Activated CD8-positive, alpha-beta memory T cell treated with anti-CD3 and anti-CD28 coated beads, Interleukin-2, amount 10 ng/mL, durations not matched to agents 7 days and 5 days (primary cell): ENCODE measurements at regions of chr3 and their contacts with region 1.

Region 1: GRCh38 chr3:171566803-171567422 is 106.7 kb upstream of the TNIK start:
- DNase-seq: no peak
- ATAC-seq: peak; percentile 66
- H3K4me3 Mint-ChIP-seq: no peak overlapping the region
- H3K27ac Mint-ChIP-seq: no peak overlapping the region
- H3K4me1 Mint-ChIP-seq: peaks cover 19% of the 10 kb centered on the region
- H3K27me3 Mint-ChIP-seq: peaks cover 19% of the 10 kb centered on the region

Region 2: DNA sequence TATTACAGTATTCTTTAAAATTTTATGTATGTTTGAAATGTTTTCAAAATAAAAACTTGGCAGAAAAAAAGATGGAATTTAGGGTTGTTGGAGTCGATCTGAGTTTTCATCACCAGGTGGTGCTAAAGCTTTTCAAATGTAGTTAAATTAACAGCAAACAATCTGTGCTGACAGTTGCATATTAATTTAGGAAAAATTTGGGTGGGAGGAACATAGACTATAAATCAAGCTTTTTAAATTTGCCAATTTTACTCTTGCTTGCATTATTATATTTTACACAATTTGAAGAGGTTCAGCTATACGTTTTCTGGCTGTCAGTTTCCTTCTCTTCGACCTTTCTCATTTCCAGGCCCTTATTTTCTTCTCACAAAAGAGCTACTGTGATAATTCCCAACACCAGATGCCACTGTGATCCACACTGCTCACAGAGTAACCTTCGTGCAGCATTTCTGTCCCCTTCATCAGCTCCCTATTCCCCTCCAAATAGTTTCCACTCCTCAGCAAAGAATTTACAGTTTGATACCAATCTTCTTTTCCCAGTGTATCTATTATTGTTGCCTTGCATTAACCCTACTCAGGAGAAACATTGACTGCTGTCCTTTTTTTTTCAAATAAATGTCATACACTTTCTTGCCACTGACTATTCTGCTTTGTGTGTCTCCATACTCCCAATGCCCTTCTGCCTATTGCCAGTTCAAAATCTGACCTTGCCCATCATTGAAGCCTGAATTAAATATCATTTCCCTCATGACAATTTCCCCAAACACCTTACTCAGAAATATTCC is 605.1 kb before region 1 on chr3:
- CTCF ChIA-PET with region 1: interaction called, 11 read pairs
- DNase-seq: no peak
- ATAC-seq: no peak
- H3K4me3 Mint-ChIP-seq: no peak overlapping the region
- H3K27ac Mint-ChIP-seq: no peak overlapping the region
- H3K4me1 Mint-ChIP-seq: peaks cover 5% of the 10 kb centered on the region
- H3K27me3 Mint-ChIP-seq: peaks cover 19% of the 10 kb centered on the region

Region 3: DNA sequence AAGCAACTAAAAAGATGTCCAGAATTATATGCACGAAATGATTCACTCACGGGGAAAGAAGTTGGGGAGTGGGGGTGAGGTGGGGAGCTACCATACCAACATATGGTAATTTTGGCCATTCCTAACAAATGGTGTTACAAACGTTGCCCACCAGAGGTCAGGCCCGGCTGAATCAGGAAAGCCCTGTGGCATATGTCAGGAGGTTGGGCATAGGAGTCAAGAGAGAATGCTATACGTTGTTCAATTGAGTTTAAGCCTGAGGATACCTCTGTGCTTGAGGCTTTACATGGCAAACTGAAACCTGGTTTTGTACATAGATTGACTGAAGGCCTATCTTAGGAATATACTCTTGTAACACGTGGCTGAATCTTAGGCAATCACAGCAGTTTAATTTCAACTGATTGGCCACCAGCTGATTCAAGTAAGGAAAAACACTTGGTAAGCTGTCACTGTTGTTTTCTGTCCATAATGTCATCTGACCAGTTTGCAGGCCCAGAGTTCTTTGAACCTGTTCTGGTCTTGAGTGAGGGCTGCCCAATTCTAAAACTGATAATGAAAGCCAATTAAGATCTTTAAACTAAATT is 517.0 kb before region 1 on chr3:
- CTCF ChIA-PET with region 1: interaction called, 26 read pairs
- DNase-seq: peak; percentile 64
- ATAC-seq: peak; percentile 76
- H3K4me3 Mint-ChIP-seq: no peak overlapping the region
- H3K27ac Mint-ChIP-seq: no peak overlapping the region
- H3K4me1 Mint-ChIP-seq: no peaks in the 10 kb centered on the region
- H3K27me3 Mint-ChIP-seq: peaks cover 8% of the 10 kb centered on the region

Region 4: DNA sequence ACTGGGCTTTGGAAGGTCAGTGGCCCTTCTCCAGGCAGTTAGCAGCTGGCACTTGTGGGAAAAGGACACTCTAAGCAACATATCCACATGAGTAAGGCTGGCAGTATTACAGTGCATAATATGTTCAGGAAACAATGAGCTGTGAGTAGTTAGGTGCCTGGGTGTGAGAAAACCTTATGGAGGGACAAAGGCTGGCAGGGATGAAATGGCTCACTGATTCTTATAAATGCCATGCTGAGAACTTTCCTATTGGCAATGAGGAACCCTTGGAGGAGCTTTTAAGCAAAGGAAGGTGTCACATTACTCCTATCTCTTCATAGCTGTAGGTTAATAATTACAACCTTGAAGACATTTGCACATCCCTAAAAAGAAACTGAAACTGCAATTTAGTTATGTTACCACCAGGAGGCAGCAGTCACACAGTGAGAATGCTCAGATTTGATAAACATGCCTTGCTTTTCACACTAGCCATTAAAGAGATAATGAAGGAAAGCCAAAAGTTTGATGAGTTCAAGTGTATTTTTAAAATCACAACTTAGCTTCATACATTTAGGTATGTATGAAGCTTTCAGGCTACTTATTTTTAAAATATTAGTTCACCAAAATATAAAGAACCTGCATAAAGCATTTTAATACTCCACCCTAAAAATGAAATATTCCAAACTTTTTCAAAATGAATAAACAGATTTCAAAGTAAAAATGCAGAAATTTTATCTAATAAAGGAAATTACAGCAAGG is 403.8 kb before region 1 on chr3:
- CTCF ChIA-PET with region 1: interaction called, 27 read pairs
- DNase-seq: no peak
- ATAC-seq: no peak
- H3K4me3 Mint-ChIP-seq: no peak overlapping the region
- H3K27ac Mint-ChIP-seq: peak overlapping the region; percentile 47
- H3K4me1 Mint-ChIP-seq: peaks cover 19% of the 10 kb centered on the region
- H3K27me3 Mint-ChIP-seq: no peaks in the 10 kb centered on the region

Region 5: DNA sequence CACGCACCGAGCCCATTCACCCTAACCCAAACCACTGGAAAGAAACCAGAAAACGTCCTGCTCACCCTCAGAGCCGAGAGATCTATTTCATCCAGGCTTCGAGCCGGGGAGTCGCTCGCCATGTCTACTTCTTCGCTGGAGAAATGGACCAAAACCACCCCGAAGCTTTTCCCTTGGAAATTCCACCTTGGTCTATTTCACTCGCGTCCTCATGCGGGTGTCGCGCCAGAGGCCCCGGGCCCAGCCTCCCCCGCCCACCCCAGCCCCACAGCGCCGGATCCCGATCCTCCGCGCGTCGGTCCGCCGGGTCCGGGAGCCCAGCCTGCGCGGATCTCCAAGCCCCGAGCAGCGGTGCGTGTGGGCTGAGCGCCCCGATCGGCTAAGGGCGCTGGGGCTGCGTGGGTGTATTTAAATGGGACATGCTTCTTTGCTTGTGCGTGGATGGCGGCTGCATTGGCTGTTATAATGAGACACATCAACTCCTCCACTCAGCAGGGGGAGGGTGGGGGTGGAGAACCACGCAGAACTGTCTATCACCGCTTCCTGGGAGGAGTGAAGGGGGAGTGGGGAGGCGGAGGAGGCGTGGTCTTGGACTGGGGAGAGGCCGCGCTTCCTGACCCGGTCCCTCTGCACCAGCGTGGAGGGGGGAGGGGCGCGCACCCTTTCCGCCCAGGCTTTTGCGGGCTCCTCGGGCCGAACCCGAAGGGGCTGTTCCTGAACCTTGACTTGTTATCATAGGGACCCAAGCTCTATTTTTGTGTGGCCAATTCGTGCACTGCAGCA is 106.8 kb before region 1 on chr3 and contains the start of gene TNIK:
- CTCF ChIA-PET with region 1: interaction called, 11 read pairs
- DNase-seq: peak; percentile 96
- ATAC-seq: peak; percentile 86
- H3K4me3 Mint-ChIP-seq: peak within 1 kb of the TSS; percentile 96
- H3K27ac Mint-ChIP-seq: peak within 1 kb of the TSS; percentile 93
- H3K4me1 Mint-ChIP-seq: peaks cover 40% of the 10 kb centered on the region
- H3K27me3 Mint-ChIP-seq: no peaks in the 10 kb centered on the region
- total RNA-seq, gene TNIK: 36.6 to 39.3 TPM

Region 6: DNA sequence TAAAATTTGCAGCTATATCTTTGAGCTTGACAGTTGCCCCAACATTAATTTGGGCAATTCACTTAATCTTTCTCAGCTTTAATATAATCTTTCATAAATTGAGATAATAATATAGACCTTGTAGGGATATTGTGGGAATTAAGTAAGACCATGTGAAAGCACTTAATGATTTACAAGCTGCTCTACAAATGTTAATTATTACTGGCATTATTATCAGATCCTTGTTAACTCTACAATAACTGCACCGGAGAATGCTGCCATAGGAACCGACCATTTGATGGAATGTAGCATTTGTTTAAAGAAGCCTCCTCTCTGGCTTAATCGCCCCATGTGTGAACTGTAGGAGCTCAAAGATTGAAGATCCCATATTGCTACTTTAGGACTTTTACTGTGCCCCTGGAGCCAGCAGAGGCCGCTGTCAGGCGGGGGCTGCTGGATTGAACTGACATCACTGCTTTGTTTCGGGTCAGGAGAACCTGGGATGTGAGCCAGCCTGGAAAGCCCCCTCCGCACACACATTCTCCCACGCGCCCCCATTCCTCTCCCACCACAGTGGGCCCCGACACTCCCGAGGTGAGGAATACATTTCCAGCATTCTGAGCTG is 47.5 kb after region 1 on chr3:
- CTCF ChIA-PET with region 1: no interaction called
- DNase-seq: no peak
- ATAC-seq: no peak
- H3K4me3 Mint-ChIP-seq: no peak overlapping the region
- H3K27ac Mint-ChIP-seq: no peak overlapping the region
- H3K4me1 Mint-ChIP-seq: no peaks in the 10 kb centered on the region
- H3K27me3 Mint-ChIP-seq: peaks cover 23% of the 10 kb centered on the region

Region 7: GRCh38 chr3:171736556-171736955 is 169.6 kb after region 1 on chr3:
- CTCF ChIA-PET with region 1: no interaction called
- DNase-seq: no peak
- ATAC-seq: no peak
- H3K4me3 Mint-ChIP-seq: no peak overlapping the region
- H3K27ac Mint-ChIP-seq: no peak overlapping the region
- H3K4me1 Mint-ChIP-seq: no peaks in the 10 kb centered on the region
- H3K27me3 Mint-ChIP-seq: peaks cover 30% of the 10 kb centered on the region